SK-N-SH (cell line): ENCODE measurements at regions of chr12 and their contacts with region 1.

Region 1: DNA sequence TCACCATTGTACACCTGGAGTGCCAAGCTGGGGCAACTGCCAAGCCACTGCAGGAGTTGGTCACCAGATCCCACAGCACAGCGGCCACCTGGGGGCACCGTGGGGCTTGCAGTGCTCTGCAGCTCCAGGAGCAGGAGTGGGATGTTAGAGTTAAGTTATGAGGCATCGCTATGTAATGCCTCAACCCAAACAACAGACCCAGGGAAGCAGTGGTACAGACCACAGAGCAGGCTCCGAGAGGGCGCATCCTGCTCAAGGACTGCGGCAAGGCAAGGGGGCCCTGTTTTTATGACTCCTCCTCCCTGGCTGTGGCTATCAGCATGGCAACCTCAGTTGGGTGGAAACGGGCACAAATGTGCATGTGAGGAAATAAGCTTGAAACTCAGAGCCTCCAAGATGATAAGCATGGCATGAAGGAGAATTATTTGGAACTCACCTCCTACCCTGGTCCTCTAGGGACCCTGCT is 63.1 kb downstream of the ARL6IP4 start:
- DNase-seq: peak; percentile 77
- H3K4me3 ChIP-seq: no peak overlapping the region
- H3K27ac ChIP-seq: peak overlapping the region in 1 of 2 experiments; percentile 44; a peak in 2 of 4 replicates
- H3K4me1 ChIP-seq: peaks cover 7 to 31% of the 10 kb centered on the region in 2 experiments; a peak in 2 of 4 replicates
- H3K27me3 ChIP-seq: no peaks in the 10 kb centered on the region
- CTCF ChIP-seq: peak; percentile 86
- EP300 ChIP-seq: no peak; a peak in 1 of 4 replicates
- RAD21 ChIP-seq: peak; percentile 92

Region 2: DNA sequence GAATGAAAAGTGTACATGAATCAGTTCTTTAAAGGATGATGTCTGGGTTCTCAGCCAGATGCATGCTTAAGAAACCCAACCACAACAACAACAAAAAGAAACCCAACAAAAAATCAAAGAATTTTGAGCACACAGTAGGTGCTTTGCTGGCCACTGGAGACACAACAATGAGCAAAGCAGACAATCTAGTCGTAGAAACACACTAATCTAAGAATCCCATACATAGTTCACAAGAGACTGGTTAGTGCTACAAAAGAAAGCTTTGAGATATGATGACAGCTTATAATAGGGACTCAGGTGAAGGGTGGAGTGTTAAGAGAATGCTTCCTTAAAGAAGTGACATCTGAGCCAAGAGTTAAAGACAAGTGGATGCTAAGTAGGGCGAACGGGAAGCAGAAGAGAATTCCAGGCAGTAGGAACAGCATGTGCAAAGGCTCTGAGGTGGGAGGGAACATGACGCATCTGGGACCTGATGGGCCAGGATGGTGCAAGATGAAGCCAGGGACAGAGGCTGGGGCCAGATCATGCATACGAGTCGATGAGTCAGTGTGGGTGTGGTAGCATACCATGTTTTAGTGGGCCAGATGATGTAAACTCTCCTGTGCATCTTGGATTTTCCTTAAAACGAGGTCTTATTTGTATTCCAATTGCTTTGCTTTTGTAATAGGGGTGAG is 212.9 kb before region 1 on chr12:
- CTCF ChIA-PET with region 1: no interaction called
- POLR2A ChIA-PET with region 1: no interaction called
- DNase-seq: no peak
- H3K4me3 ChIP-seq: no peak overlapping the region
- H3K27ac ChIP-seq: no peak overlapping the region
- H3K4me1 ChIP-seq: peaks cover 0 to 2% of the 10 kb centered on the region in 2 experiments; a peak in 1 of 4 replicates
- H3K27me3 ChIP-seq: no peaks in the 10 kb centered on the region
- CTCF ChIP-seq: no peak
- EP300 ChIP-seq: no peak
- RAD21 ChIP-seq: no peak

Region 3: DNA sequence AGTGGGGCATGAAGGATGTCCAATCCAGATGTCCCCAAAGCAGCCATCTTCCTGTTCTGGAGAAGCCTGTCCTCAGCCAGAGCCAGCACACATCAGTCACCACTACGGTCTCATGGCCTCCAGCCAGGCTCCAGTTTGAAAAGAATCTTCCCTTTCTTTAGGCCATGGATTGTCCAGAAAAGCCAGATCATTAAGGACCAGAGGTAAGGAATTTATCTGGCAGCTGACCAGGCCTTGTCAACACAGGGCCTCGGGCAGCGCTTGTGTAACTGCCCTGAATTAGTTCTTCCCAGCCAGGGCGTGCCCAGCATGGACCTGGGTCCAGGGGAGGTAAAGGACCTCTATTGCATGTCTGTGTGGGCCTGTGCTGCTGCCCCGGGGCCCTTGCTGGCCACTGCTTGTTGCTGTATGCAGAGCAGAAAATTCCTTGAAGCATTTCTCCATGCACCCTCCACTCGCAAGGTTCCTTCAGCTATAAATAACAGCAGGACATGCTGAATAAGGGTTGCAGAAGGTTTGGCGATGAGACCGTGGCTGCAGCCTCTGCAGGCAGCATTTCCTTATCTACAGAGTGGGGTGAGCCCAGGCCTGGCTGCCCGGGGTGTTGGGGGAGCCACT is 126.0 kb before region 1 on chr12:
- CTCF ChIA-PET with region 1: no interaction called
- POLR2A ChIA-PET with region 1: no interaction called
- DNase-seq: no peak
- H3K4me3 ChIP-seq: no peak overlapping the region
- H3K27ac ChIP-seq: no peak overlapping the region; a peak in 1 of 4 replicates
- H3K4me1 ChIP-seq: peaks cover 4 to 6% of the 10 kb centered on the region in 2 experiments; a peak in 1 of 4 replicates
- H3K27me3 ChIP-seq: no peaks in the 10 kb centered on the region
- CTCF ChIP-seq: no peak
- EP300 ChIP-seq: no peak
- RAD21 ChIP-seq: no peak

Region 4: GRCh38 chr12:123032736-123033391 is 10.7 kb before region 1 on chr12:
- CTCF ChIA-PET with region 1: interaction called, 14 read pairs
- POLR2A ChIA-PET with region 1: no interaction called
- DNase-seq: no peak
- H3K4me3 ChIP-seq: no peak overlapping the region
- H3K27ac ChIP-seq: no peak overlapping the region
- H3K4me1 ChIP-seq: peaks cover 8 to 10% of the 10 kb centered on the region in 2 experiments; a peak in 3 of 4 replicates
- H3K27me3 ChIP-seq: no peaks in the 10 kb centered on the region
- CTCF ChIP-seq: no peak
- EP300 ChIP-seq: no peak
- RAD21 ChIP-seq: no peak

Region 5: GRCh38 chr12:123056053-123056741 is 12.6 kb after region 1 on chr12:
- CTCF ChIA-PET with region 1: interaction called, 25 read pairs
- POLR2A ChIA-PET with region 1: no interaction called
- DNase-seq: no peak
- H3K4me3 ChIP-seq: no peak overlapping the region
- H3K27ac ChIP-seq: no peak overlapping the region
- H3K4me1 ChIP-seq: peaks cover 3 to 7% of the 10 kb centered on the region in 2 experiments; a peak in 1 of 4 replicates
- H3K27me3 ChIP-seq: no peaks in the 10 kb centered on the region
- CTCF ChIP-seq: no peak
- EP300 ChIP-seq: no peak
- RAD21 ChIP-seq: no peak

Region 6: DNA sequence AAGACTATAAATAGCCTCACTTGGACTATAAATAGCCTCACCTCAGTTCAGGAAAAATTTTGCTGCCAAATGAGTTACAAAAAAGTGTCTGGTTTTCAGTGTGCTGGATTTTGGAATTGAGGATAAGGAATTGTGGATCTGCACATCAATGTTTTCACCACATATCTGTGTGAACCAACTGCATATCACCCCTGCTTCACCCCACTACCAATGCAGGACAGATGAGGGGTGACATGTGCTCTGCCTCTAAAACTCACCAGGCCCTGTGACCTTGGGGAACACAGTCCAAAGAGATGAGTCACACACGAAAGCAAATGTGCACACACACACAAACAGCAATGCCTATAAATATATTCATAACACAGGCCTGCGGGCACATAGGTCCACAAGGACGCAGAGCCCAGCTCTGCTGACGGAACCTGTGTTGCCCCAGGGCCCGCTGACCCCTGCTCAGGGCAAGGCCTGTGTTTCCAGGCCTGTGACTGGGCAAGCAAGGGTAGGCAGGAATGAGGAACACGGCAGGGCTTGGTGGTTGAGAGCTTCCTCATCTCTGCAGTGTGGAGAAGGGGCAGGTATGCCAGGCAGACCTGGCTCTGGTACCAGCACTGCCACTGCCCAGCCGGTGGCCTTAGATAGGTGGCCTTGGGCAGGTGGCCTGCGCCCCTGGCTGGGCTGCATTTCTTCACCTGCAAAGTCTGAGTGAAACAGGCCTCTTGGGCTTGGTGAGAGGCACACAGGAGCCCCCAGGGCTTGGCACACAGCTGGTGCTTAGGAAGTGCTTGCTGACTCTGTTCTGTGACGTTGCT is 19.3 kb after region 1 on chr12:
- CTCF ChIA-PET with region 1: interaction called, 25 read pairs
- POLR2A ChIA-PET with region 1: no interaction called
- DNase-seq: no peak
- H3K4me3 ChIP-seq: no peak overlapping the region
- H3K27ac ChIP-seq: peak overlapping the region; percentile 41 to 58; a peak in 3 of 4 replicates
- H3K4me1 ChIP-seq: peaks cover 14 to 15% of the 10 kb centered on the region in 2 experiments; a peak in 3 of 4 replicates
- H3K27me3 ChIP-seq: no peaks in the 10 kb centered on the region
- CTCF ChIP-seq: no peak
- EP300 ChIP-seq: no peak
- RAD21 ChIP-seq: no peak

Region 7: DNA sequence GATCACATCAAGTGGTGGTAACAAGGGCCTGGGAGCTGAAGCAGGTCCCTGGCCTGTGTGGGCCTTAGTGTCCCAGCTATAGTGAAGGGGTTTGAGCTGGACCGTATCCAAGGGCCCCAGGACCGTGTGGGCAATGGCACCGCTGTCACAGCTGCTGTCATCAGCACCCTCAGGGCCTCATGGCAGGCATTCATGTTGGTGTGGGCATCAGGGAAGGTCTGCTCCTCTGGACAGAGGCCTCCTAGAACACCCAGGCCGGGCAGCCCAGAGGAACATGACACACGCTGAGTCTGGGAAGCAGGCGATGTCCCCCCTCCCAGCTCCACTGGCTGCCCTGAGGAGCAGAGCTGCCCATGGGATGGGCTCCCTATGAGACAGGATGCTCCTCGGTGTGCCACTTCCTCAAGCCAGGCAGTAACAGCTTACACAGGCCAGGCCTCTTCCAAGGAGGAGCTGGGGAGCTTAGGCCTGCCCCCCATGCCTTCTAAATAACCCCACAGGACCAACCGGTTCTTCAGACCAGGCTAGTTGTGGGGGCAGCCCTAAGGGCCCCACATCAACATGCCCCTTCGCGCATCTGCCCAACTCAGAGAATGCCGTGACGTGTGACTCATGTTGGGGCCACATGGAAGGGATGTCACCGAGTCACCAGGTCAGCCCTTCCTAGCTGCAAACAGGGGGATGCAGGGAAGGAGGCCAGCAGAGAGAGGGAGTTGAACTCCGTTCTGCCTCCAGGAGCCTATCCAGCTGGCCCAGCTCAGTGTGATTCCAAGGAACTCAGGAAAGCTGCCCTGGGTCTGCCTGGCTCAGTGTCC is 26.9 kb after region 1 on chr12:
- CTCF ChIA-PET with region 1: interaction called, 18 read pairs
- POLR2A ChIA-PET with region 1: no interaction called
- DNase-seq: peak; percentile 31
- H3K4me3 ChIP-seq: no peak overlapping the region
- H3K27ac ChIP-seq: peak overlapping the region in 1 of 2 experiments; percentile 60; a peak in 1 of 4 replicates
- H3K4me1 ChIP-seq: peaks cover 0 to 35% of the 10 kb centered on the region in 2 experiments; a peak in 1 of 4 replicates
- H3K27me3 ChIP-seq: no peaks in the 10 kb centered on the region
- CTCF ChIP-seq: no peak
- EP300 ChIP-seq: no peak
- RAD21 ChIP-seq: no peak

Region 8: GRCh38 chr12:123150744-123151456 is 107.3 kb after region 1 on chr12 and contains the start of gene PITPNM2:
- CTCF ChIA-PET with region 1: interaction called, 14 read pairs
- POLR2A ChIA-PET with region 1: no interaction called
- DNase-seq: peak; percentile 90
- H3K4me3 ChIP-seq: peak within 1 kb of the TSS; percentile 72 to 82
- H3K27ac ChIP-seq: peak within 1 kb of the TSS in 1 of 2 experiments; percentile 55; a peak in 2 of 4 replicates
- H3K4me1 ChIP-seq: peaks cover 0 to 19% of the 10 kb centered on the region in 2 experiments; a peak in 1 of 4 replicates
- H3K27me3 ChIP-seq: no peaks in the 10 kb centered on the region
- CTCF ChIP-seq: no peak; the same call in 1 of the 2 replicates
- EP300 ChIP-seq: no peak
- RAD21 ChIP-seq: no peak
- polyA plus RNA-seq, gene PITPNM2: 2.6 and 3.7 TPM in 2 replicates

Region 9: GRCh38 chr12:123445388-123446351 is 402.1 kb after region 1 on chr12:
- CTCF ChIA-PET with region 1: no interaction called
- POLR2A ChIA-PET with region 1: no interaction called
- DNase-seq: no peak
- H3K4me3 ChIP-seq: no peak overlapping the region
- H3K27ac ChIP-seq: peak overlapping the region in 1 of 2 experiments; percentile 34; a peak in 2 of 4 replicates
- H3K4me1 ChIP-seq: peaks cover 0 to 2% of the 10 kb centered on the region in 2 experiments; a peak in 2 of 4 replicates
- H3K27me3 ChIP-seq: no peaks in the 10 kb centered on the region
- CTCF ChIP-seq: no peak
- EP300 ChIP-seq: no peak
- RAD21 ChIP-seq: no peak